ENCODE measurements at regions of chr9 and their contacts with region 1.

Region 1: GRCh38 chr9:2087500-2088313 is 72.6 kb downstream of the SMARCA2 start:
- DNase-seq: peak; percentile 37
- H3K4me3 Mint-ChIP-seq: no peak overlapping the region
- H3K27ac Mint-ChIP-seq: peak overlapping the region; percentile 74
- H3K4me1 Mint-ChIP-seq: peaks cover 28% of the 10 kb centered on the region
- H3K27me3 Mint-ChIP-seq: no peaks in the 10 kb centered on the region

Region 2: GRCh38 chr9:1460143-1460769 is 627.5 kb before region 1 on chr9:
- CTCF ChIA-PET with region 1: no interaction called
- POLR2A ChIA-PET with region 1: no interaction called
- intact Hi-C with region 1: loop called (anchors 1 kb)
- DNase-seq: peak; percentile 16
- H3K4me3 Mint-ChIP-seq: no peak overlapping the region
- H3K27ac Mint-ChIP-seq: no peak overlapping the region
- H3K4me1 Mint-ChIP-seq: peaks cover 4% of the 10 kb centered on the region
- H3K27me3 Mint-ChIP-seq: peaks cover 2% of the 10 kb centered on the region

Region 3: DNA sequence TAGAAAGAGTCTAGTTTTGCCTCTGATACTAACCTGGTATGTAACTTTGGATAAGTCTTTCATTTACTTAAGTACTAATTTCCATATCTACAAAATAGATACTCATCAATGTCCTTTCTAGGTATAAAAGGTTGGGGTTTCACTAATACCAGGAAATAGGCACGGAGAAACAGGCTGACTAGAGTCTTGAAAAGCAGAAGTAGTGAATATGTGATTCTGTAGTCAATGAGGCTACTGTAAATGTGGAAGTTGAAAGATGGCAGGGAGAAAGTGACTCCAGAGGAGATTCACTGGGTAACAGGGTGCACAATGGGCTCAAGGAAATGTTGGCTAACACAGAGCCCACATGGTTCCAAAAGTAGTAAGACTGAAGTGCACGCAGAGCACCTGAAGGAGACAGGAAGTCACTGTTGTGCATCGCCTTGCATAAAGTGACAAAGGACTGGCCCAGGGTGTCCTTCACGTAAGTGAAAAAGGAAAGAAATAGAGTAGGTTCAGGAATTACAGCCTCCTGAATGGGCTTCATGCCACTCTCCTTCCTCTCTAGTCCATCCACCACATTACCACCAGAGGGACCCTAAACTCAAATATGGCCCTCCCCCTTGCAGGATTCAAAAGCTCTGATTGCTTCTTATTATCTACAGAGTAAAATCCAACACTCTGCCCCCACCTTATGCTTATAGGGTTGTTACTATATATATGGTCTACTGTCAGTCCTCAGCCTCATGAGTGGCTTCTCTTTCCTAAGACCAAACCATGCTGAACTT is 360.5 kb before region 1 on chr9:
- CTCF ChIA-PET with region 1: interaction called, 6 read pairs
- POLR2A ChIA-PET with region 1: no interaction called
- intact Hi-C with region 1: loop called (anchors 5 kb)
- DNase-seq: no peak
- H3K4me3 Mint-ChIP-seq: no peak overlapping the region
- H3K27ac Mint-ChIP-seq: no peak overlapping the region
- H3K4me1 Mint-ChIP-seq: no peaks in the 10 kb centered on the region
- H3K27me3 Mint-ChIP-seq: peaks cover 4% of the 10 kb centered on the region

Region 4: DNA sequence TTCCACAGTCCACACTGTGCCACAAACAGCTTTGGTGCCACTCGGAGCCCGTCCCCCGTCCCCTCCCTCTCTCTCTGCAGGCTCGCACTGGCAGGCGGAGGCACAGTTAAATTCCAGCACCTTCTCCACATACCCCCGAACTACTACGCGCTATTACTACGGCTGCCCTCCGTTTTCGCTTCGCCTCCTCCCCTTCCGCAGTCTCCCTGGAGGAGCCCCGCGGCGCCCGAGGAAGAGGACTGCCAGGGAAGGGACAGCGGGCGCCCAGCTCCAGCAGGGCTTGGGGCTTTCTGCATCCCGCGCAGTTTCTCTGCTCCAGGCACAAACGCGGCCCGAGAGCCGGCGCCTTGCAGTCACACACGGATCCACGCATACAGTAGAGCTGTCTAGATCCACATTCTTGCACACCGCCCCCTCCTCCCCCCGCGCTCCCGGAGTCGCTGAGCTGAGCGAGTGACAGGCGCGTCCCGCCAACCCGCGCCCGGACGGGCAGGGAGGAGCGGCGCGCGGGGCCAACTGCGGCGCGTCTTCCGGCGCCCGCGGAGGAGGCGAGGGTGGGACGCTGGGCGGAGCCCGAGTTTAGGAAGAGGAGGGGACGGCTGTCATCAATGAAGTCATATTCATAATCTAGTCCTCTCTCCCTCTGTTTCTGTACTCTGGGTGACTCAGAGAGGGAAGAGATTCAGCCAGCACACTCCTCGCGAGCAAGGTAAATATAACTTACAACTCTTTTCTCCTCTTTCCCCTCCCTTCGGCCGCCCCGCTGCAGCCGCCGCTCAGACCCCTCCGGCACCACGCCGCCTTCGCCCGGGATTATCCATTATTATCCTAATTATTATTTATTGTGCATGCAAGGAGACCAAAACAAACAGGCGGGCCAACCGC is 72.8 kb before region 1 on chr9 and contains the start of gene SMARCA2:
- CTCF ChIA-PET with region 1: interaction called, 7 read pairs
- POLR2A ChIA-PET with region 1: interaction called, 3 read pairs
- intact Hi-C with region 1: loop called (anchors 1 kb)
- DNase-seq: peak; percentile 98
- H3K4me3 Mint-ChIP-seq: peak within 1 kb of the TSS; percentile 99
- H3K27ac Mint-ChIP-seq: peak within 1 kb of the TSS; percentile 100
- H3K4me1 Mint-ChIP-seq: peaks cover 47% of the 10 kb centered on the region
- H3K27me3 Mint-ChIP-seq: peaks cover 4% of the 10 kb centered on the region
- total RNA-seq, gene SMARCA2: 95.1 to 100 TPM

Region 5: DNA sequence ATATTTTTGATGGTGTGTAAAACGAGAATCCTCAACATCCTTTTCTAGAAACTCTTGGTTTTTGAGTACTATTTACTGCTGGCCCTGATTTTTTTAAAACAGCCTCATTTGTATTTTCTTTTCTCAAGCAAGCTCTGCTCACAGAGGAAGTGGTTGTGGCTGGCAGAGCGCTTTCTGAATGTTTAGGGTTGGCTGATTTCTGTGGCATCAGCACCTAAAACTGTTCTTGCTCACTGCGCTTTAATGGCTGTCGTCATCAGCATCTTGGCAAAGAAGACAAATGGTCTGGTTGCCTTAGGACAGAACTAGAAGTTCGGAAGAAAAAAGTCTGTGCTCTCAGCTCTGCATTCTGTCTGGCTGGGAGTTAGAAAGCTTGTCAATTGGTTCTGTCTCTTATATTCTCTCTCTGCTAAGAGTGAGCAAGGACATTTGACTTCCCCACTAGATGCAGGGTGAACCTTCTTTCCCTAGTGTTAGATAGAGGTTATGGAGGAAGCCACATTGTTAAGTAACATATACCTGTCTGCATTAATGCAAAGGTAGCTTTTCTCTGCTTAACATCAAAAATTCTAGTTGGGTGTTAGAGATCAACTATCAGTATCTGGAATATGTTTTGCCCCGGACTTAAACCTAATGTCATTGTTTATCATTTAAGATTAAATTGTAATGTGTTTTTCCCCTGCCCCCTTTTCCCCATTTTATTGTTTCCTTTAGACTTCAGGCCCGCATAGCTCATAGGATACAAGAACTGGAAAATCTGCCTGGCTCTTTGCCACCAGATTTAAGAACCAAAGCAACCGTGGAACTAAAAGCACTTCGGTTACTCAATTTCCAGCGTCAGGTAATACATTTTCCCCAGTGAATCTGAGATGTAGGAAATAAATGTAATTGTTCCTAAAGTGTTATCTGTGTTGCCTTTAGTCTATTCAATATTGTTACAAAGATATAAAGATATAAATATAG is 33.5 kb before region 1 on chr9:
- CTCF ChIA-PET with region 1: interaction called, 12 read pairs
- POLR2A ChIA-PET with region 1: interaction called, 4 read pairs
- intact Hi-C with region 1: loop called (anchors 1 kb)
- DNase-seq: peak; percentile 88
- H3K4me3 Mint-ChIP-seq: peak overlapping the region; percentile 34
- H3K27ac Mint-ChIP-seq: peak overlapping the region; percentile 83
- H3K4me1 Mint-ChIP-seq: peaks cover 46% of the 10 kb centered on the region
- H3K27me3 Mint-ChIP-seq: no peaks in the 10 kb centered on the region

Region 6: GRCh38 chr9:2181792-2182191 is 94.1 kb after region 1 on chr9:
- CTCF ChIA-PET with region 1: no interaction called
- POLR2A ChIA-PET with region 1: no interaction called
- intact Hi-C with region 1: no loop called
- DNase-seq: peak; percentile 29
- H3K4me3 Mint-ChIP-seq: no peak overlapping the region
- H3K27ac Mint-ChIP-seq: no peak overlapping the region
- H3K4me1 Mint-ChIP-seq: peaks cover 6% of the 10 kb centered on the region
- H3K27me3 Mint-ChIP-seq: no peaks in the 10 kb centered on the region

Measured in activated CD4-positive, alpha-beta memory T cell treated with anti-CD3 and anti-CD28 coated beads for 36 hours (primary cell).